ENCODE measurements at regions of chr9 and their contacts with region 1.

Region 1: DNA sequence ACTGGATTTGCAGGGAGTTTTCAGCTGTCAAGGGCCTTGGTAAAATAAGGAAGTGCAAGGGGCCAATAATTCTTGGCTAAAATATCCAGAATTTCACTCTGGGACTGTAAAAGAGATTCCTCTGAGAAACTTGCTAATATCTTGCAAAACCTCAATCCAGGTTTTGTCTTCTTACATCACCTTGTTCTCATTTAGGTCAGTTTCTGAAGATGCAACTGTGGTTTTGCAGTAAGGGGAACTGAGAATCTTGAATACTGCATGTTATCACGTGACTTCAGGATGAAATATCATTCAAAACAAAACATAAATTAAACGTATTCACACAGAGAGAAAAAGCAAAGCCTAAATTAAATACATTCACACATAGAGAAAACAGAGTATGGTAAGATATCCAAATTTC is 35.0 kb upstream of the RIC1 start:
- DNase-seq: no peak
- ATAC-seq: peak; percentile 32
- H3K4me3 Mint-ChIP-seq: peak overlapping the region; percentile 70
- H3K27ac Mint-ChIP-seq: peak overlapping the region; percentile 98
- H3K4me1 Mint-ChIP-seq: peaks cover 94% of the 10 kb centered on the region
- H3K27me3 Mint-ChIP-seq: no peaks in the 10 kb centered on the region
- CTCF ChIP-seq: no peak

Region 2: GRCh38 chr9:5073701-5074100 is 520.2 kb before region 1 on chr9:
- CTCF ChIA-PET with region 1: no interaction called
- POLR2A ChIA-PET with region 1: no interaction called
- intact Hi-C with region 1: loop called (anchors 5 kb)
- DNase-seq: no peak
- ATAC-seq: no peak
- H3K4me3 Mint-ChIP-seq: no peak overlapping the region
- H3K27ac Mint-ChIP-seq: no peak overlapping the region
- H3K4me1 Mint-ChIP-seq: no peaks in the 10 kb centered on the region
- H3K27me3 Mint-ChIP-seq: no peaks in the 10 kb centered on the region
- CTCF ChIP-seq: no peak

Region 3: DNA sequence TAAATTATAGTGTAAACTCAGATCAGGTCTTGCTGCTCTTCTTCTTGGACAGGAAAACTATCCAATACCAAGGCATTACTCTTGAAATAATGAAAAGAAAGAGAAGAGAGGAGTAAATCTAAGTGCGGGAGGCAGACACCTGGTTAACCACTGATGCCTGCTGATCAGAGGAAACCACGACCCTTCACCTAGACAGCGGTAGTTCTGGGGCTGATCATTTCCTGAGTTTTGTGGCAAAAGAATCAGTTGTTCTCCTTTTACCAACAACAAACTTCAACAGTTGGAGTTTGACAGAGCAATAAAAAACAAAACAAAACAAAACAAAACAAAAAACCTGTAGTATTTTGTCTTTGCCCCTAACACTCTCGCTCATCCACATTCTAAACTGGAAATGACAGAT is 257.2 kb before region 1 on chr9:
- CTCF ChIA-PET with region 1: no interaction called
- POLR2A ChIA-PET with region 1: no interaction called
- intact Hi-C with region 1: loop called (anchors 10 kb)
- DNase-seq: no peak
- ATAC-seq: no peak
- H3K4me3 Mint-ChIP-seq: no peak overlapping the region
- H3K27ac Mint-ChIP-seq: peak overlapping the region; percentile 7
- H3K4me1 Mint-ChIP-seq: peaks cover 12% of the 10 kb centered on the region
- H3K27me3 Mint-ChIP-seq: no peaks in the 10 kb centered on the region
- CTCF ChIP-seq: no peak

Region 4: GRCh38 chr9:5493679-5494511 is 100.0 kb before region 1 on chr9:
- CTCF ChIA-PET with region 1: interaction called, 3 read pairs
- POLR2A ChIA-PET with region 1: no interaction called
- intact Hi-C with region 1: loop called (anchors 5 kb)
- DNase-seq: no peak
- ATAC-seq: peak; percentile 78
- H3K4me3 Mint-ChIP-seq: peak overlapping the region; percentile 3
- H3K27ac Mint-ChIP-seq: peak overlapping the region; percentile 54
- H3K4me1 Mint-ChIP-seq: peaks cover 17% of the 10 kb centered on the region
- H3K27me3 Mint-ChIP-seq: no peaks in the 10 kb centered on the region
- CTCF ChIP-seq: no peak

Region 5: DNA sequence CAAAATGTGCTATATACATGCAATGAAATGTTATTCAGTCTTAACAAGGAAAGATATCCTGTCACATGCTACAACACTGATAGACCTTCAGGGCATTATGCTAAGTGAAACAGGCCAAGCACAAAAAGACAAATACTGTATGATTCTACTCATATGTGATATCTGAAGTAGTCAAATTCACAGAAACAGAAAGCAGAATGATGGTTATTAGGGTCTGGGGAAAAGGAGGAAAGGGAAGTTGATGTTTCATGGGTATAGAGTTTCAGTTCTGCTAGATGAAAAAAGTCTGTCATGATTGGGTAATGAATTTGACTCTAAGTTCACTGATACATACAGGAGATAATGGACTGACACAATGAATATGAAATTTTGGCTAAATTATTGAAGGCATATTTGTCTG is 23.8 kb after region 1 on chr9:
- CTCF ChIA-PET with region 1: no interaction called
- POLR2A ChIA-PET with region 1: no interaction called
- intact Hi-C with region 1: loop called (anchors 1 kb)
- DNase-seq: no peak
- ATAC-seq: peak; percentile 95
- H3K4me3 Mint-ChIP-seq: peak overlapping the region; percentile 45
- H3K27ac Mint-ChIP-seq: peak overlapping the region; percentile 79
- H3K4me1 Mint-ChIP-seq: peaks cover 55% of the 10 kb centered on the region
- H3K27me3 Mint-ChIP-seq: no peaks in the 10 kb centered on the region
- CTCF ChIP-seq: no peak

Region 6: DNA sequence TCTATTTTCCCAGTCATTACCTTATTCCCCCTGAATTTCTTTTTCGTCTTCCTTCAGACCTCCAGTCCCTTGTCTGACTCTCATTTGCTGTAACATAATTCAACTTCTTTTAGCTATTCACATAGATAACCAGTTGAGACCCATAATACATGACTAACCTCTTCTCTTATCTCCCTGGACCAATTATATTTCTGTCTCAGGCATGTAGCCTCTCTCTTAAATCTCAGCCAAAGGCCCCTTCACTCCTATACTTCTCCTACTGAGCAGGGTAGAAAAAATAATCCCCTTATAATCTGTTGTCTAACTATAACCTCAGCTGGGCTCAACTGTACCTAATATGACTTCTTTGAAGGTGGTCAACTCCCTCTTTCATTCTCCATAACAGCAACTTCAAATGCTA is 400.6 kb after region 1 on chr9:
- CTCF ChIA-PET with region 1: no interaction called
- POLR2A ChIA-PET with region 1: no interaction called
- intact Hi-C with region 1: no loop called
- DNase-seq: no peak
- ATAC-seq: no peak
- H3K4me3 Mint-ChIP-seq: no peak overlapping the region
- H3K27ac Mint-ChIP-seq: no peak overlapping the region
- H3K4me1 Mint-ChIP-seq: peaks cover 37% of the 10 kb centered on the region
- H3K27me3 Mint-ChIP-seq: no peaks in the 10 kb centered on the region
- CTCF ChIP-seq: no peak

Measured in activated B cell treated with CpG ODN at 0.5 μM for 24 hours (primary cell).